ENCODE measurements at regions of chr5 and their contacts with region 1.

Region 1: GRCh38 chr5:131263648-131264450 is at the start of gene CDC42SE2:
- DNase-seq: peak; percentile 95
- H3K4me3 ChIP-seq: peak within 1 kb of the TSS; percentile 83
- H3K27ac ChIP-seq: peak within 1 kb of the TSS; percentile 85
- H3K4me1 ChIP-seq: peaks cover 49% of the 10 kb centered on the region
- CTCF ChIP-seq: no peak
- total RNA-seq, gene CDC42SE2: 34.7 and 54.2 TPM in 2 replicates

Region 2: DNA sequence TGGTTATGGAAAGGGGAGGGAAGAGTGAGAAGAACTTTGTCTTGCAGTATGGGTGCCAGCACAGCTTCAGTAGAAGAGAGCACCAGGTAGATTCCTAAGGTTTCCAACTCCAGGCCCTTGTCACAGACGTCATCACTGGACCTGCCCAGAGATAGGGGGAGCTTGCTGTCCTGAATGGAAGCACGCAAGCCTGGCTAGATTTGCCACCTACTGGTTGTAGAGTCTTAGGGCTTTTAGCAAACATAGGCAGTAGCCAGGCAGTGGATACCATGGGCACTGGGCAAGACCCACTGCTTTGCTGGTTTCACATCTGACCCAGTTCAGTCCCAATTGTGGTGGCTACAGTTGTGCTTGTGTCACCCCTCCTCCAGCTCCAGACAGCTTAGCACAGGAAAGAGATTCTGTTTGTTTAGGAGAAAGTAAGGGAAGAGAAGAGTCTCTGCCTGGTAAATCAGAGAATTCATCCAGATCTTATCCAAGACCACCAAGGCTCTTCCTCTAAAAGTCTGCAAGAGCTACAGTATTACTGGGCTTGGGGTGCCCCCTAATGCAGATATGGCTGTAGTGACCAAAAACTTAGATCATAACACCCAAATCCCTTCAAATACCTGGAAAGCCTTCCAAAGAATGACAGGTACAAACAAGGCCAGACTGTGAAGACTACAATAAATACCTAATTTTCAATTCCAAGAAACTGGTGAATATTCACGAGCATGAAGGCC is 257.7 kb before region 1 on chr5:
- CTCF ChIA-PET with region 1: no interaction called
- POLR2A ChIA-PET with region 1: no interaction called
- intact Hi-C with region 1: no loop called
- DNase-seq: no peak
- H3K4me3 ChIP-seq: no peak overlapping the region
- H3K27ac ChIP-seq: no peak overlapping the region
- H3K4me1 ChIP-seq: no peaks in the 10 kb centered on the region
- CTCF ChIP-seq: peak; percentile 35

Region 3: DNA sequence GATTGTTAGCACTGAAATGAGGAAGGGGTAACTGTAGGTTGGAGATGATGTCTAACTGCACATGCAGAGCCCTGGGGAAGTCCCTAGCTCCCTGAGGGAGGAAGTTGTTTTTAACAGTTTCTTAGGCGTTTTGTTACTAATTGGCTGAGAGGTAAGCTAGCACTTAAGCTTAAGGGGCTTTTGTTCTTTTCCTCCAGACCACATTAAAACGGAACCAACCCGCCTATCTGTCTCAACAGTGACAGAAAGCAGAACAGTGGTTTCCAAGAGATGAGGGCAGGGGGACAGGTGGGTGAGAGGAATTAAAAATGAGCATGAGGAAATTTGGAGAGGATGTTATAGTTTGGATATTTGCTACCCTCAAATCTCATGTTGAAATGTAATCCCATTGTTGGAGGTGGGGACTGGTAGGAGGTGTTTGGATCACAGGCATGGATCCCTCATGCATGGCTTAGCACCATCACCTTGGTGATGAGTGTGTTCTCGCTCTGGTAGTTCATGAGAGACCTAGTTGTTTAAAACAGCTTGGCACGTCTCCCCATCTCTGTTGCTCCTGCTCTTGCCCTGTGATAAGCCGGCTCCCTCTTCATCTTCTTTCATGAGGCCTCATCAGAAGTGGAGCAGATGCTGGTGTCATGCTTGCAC is 54.2 kb before region 1 on chr5:
- CTCF ChIA-PET with region 1: no interaction called
- POLR2A ChIA-PET with region 1: interaction called, 67 read pairs
- intact Hi-C with region 1: loop called (anchors 1 kb)
- DNase-seq: peak; percentile 94
- H3K4me3 ChIP-seq: peak overlapping the region; percentile 68
- H3K27ac ChIP-seq: peak overlapping the region; percentile 96
- H3K4me1 ChIP-seq: peaks cover 67% of the 10 kb centered on the region
- CTCF ChIP-seq: no peak

Region 4: DNA sequence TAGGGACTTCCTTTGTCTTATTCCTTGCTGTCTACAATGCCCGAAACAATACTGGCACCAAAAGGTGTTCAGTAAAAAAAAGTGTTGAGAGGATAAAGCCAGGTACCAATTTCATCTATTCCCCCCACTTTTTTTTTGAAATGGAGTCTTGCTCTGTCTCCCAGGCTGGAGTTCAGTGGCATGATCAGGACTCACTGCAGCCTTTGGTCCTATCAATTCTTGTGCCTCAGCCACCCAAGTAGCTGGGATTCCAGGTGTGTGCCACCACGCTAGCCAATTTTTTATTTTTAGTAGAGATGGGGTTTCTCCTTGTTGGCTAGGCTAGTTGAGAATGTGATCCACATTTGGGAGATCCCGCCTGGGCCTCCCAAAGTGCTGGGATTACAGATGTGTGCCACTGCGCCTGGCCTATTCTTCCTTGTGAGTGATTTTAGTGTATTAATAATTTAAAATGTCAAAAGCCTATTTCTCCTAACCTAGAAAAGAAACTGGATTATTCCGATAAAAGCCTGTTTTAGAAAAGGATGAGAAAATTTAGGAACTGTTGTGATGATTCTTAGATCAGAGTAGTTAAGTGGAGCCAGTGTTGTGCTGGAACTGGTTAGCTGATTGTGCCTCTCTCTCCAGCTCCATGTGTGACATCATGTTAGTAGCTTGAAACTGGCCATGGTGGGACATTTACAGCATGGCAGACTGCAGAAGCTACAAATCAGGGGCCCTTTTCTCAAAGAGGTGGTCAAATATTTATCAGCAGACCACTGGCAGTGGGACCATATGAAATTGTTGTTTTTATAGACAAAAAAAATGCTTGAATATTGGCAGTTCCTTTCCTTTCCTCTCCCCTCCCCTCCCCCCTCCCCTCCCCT is 14.3 kb after region 1 on chr5:
- CTCF ChIA-PET with region 1: interaction called, 3 read pairs
- POLR2A ChIA-PET with region 1: interaction called, 63 read pairs
- intact Hi-C with region 1: no loop called
- DNase-seq: no peak
- H3K4me3 ChIP-seq: no peak overlapping the region
- H3K27ac ChIP-seq: peak overlapping the region; percentile 19
- H3K4me1 ChIP-seq: peaks cover 64% of the 10 kb centered on the region
- CTCF ChIP-seq: no peak

Region 5: DNA sequence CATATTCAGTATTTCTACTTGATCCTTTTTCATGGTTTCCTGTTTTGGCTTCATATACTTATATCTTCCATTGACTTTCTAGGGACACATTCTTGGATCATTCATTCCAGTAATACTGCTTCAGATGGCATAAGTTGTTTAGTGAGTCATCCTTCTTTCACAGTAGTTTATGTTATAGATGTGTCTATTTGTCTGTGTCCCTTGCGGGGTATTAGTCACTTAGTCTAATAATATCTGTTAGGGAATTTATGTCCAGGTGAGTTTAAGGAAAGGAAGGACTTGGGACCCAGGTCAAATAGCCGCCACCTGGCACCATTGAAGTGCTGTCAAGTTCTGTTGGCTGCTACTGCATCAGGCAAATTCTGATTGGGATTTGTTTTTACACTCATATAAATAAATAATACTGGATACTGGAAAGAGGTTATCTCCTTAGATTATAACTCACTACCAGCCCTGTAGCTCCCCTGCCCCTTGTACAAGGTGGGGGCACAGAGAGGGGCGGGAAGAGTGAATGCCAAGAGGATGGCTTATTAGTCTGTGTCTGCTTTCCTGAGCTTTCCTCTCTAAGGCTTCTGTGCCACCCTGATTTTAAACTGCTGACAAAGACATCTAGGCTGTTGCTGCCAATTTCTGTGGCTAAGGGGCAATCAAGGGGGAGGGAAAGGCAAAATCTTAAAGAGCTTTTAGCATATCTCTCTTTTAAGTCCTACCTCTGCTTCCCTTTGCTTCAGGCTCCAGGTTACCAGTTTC is 64.9 kb after region 1 on chr5:
- CTCF ChIA-PET with region 1: no interaction called
- POLR2A ChIA-PET with region 1: no interaction called
- intact Hi-C with region 1: no loop called
- DNase-seq: no peak
- H3K4me3 ChIP-seq: no peak overlapping the region
- H3K27ac ChIP-seq: no peak overlapping the region
- H3K4me1 ChIP-seq: no peaks in the 10 kb centered on the region
- CTCF ChIP-seq: no peak

Region 6: GRCh38 chr5:131375351-131375750 is 111.5 kb after region 1 on chr5:
- CTCF ChIA-PET with region 1: interaction called, 10 read pairs
- POLR2A ChIA-PET with region 1: interaction called, 27 read pairs
- intact Hi-C with region 1: no loop called
- DNase-seq: no peak
- H3K4me3 ChIP-seq: peak overlapping the region; percentile 15
- H3K27ac ChIP-seq: peak overlapping the region; percentile 57
- H3K4me1 ChIP-seq: peaks cover 64% of the 10 kb centered on the region
- CTCF ChIP-seq: no peak

Region 7: GRCh38 chr5:131796793-131797693 is 533.2 kb after region 1 on chr5 and contains the start of gene FNIP1:
- CTCF ChIA-PET with region 1: no interaction called
- POLR2A ChIA-PET with region 1: interaction called, 3 read pairs
- intact Hi-C with region 1: loop called (anchors 10 kb)
- DNase-seq: peak; percentile 97
- H3K4me3 ChIP-seq: peak within 1 kb of the TSS; percentile 87
- H3K27ac ChIP-seq: peak within 1 kb of the TSS; percentile 43
- H3K4me1 ChIP-seq: peaks cover 35% of the 10 kb centered on the region
- CTCF ChIP-seq: no peak
- total RNA-seq, gene FNIP1: 16.1 and 19.4 TPM in 2 replicates